Naive thymus-derived CD4-positive, alpha-beta T cell (primary cell): ENCODE measurements at regions of chr3 and their contacts with region 1.

Region 1: DNA sequence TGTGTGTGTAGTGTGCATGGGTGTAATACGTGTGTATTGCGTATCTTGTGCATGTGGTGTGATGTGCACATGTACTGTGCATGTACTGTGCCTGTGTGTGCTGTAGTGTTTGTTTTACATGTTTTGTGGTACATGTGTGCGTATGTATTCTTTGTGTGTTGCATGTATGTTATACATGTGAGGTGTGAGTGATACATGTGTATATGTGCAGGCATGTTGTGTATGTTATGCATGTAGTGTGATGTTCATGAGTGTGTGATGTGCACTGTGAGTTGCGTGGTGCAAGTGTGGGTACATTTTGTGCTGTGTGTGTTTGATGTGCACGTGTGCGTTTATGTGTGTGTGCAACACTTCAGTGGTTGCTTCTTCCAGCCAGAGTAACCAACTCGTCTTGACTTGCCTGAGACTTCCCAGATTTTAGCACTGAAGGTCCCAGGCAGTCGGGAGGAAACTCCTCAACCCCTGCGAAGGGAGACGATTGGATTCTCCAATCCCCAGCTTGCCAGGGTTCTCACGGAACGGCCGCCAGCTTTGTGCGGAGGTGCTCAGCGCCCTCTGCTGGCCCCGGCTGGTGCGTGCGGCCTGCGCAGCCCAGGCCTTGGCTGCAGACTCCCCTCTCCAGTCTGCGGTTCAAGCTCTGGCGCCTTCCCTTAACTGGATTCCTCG is 3.6 kb downstream of the GALNT15 start:
- DNase-seq: peak; percentile 10 to 72 (median 48)
- ATAC-seq: peak; percentile 75
- H3K4me3 ChIP-seq: no peak overlapping the region
- H3K4me3 Mint-ChIP-seq: peak overlapping the region in 2 of 10 donors; percentile 38 to 39
- H3K27ac ChIP-seq: no peak overlapping the region
- H3K27ac Mint-ChIP-seq: peak overlapping the region in 1 of 9 donors; percentile 40
- H3K4me1 ChIP-seq: no peaks in the 10 kb centered on the region
- H3K4me1 Mint-ChIP-seq: peaks cover 0 to 7% (median 5%) of the 10 kb centered on the region in 7 donors
- H3K27me3 ChIP-seq: no peaks in the 10 kb centered on the region
- H3K27me3 Mint-ChIP-seq: peaks cover 9 to 23% (median 19%) of the 10 kb centered on the region in 5 donors

Region 2: GRCh38 chr3:14863333-14864100 is 1314.6 kb before region 1 on chr3:
- CTCF ChIA-PET with region 1: no interaction called
- POLR2A ChIA-PET with region 1: no interaction called
- intact Hi-C with region 1: no loop called
- DNase-seq: no peak
- ATAC-seq: peak; percentile 8
- H3K4me3 ChIP-seq: no peak overlapping the region
- H3K4me3 Mint-ChIP-seq: no peak overlapping the region
- H3K27ac ChIP-seq: no peak overlapping the region
- H3K27ac Mint-ChIP-seq: peak overlapping the region in 2 of 9 donors; percentile 36 to 43
- H3K4me1 ChIP-seq: no peaks in the 10 kb centered on the region
- H3K4me1 Mint-ChIP-seq: no peaks in the 10 kb centered on the region
- H3K27me3 ChIP-seq: no peaks in the 10 kb centered on the region
- H3K27me3 Mint-ChIP-seq: peaks cover 0 to 14% (median 5%) of the 10 kb centered on the region in 5 donors

Region 3: DNA sequence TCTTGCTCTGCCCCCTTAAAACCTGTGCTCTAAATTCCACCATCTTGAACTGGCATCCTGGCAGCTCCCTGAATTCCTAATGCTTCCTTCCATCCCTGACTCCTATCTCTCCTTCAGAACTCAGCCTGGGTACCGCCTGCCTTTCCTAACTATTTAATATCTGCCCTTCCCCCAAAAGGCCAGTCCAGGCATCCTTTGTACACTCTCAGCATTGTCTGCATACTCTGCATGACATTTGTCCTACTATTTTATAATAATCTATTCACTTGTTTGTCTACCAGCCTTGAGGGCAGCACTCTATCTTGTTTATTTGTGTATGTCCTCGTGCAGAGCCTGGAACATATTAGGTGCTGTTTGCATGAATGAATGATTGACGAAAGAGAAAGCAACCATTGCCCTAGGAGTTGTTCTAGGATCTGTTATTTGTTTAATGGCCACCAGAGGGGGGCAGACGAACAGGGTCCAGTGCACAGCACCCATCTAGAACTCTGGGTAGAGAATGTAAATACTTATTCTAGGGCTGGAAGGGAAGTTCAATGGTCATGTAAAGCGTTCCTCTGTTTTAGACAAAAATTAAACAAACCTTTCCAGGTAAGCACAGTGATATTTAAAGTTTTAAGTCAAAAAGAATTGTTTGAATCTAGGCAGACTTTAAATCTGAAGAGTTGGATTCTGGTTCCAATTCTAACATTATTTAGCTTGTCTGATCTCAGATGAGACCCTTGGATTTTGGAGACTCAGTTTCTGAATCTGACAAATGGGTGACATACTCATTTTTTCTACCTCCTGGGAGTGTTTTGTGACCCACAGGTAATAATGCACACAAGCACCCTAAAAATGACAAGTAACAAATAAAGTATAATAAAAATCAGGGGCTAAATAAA is 129.4 kb before region 1 on chr3:
- CTCF ChIA-PET with region 1: interaction called, 8 read pairs
- POLR2A ChIA-PET with region 1: no interaction called
- intact Hi-C with region 1: loop called (anchors 1 kb)
- DNase-seq: peak in 7 of 9 donors; percentile 11 to 53 (median 43)
- ATAC-seq: peak; percentile 92
- H3K4me3 ChIP-seq: no peak overlapping the region
- H3K4me3 Mint-ChIP-seq: peak overlapping the region in 5 of 10 donors; percentile 4 to 72 (median 48)
- H3K27ac ChIP-seq: no peak overlapping the region
- H3K27ac Mint-ChIP-seq: no peak overlapping the region
- H3K4me1 ChIP-seq: no peaks in the 10 kb centered on the region
- H3K4me1 Mint-ChIP-seq: peaks cover 0 to 5% (median 4%) of the 10 kb centered on the region in 7 donors
- H3K27me3 ChIP-seq: no peaks in the 10 kb centered on the region
- H3K27me3 Mint-ChIP-seq: peaks cover 0 to 5% (median 0%) of the 10 kb centered on the region in 5 donors

Region 4: GRCh38 chr3:16543242-16543864 is 365.3 kb after region 1 on chr3:
- CTCF ChIA-PET with region 1: no interaction called
- POLR2A ChIA-PET with region 1: no interaction called
- intact Hi-C with region 1: no loop called
- DNase-seq: no peak
- ATAC-seq: no peak
- H3K4me3 ChIP-seq: no peak overlapping the region
- H3K4me3 Mint-ChIP-seq: no peak overlapping the region
- H3K27ac ChIP-seq: no peak overlapping the region
- H3K27ac Mint-ChIP-seq: no peak overlapping the region
- H3K4me1 ChIP-seq: no peaks in the 10 kb centered on the region
- H3K4me1 Mint-ChIP-seq: peaks cover 0 to 27% (median 0%) of the 10 kb centered on the region in 7 donors
- H3K27me3 ChIP-seq: peaks cover 0 to 1% of the 10 kb centered on the region in 2 donors
- H3K27me3 Mint-ChIP-seq: peaks cover 0 to 23% (median 4%) of the 10 kb centered on the region in 5 donors